ENCODE measurements at regions of chr6 and their contacts with region 1.

Region 1: GRCh38 chr6:56708810-56709597 is 66.3 kb upstream of the DST start:
- DNase-seq: no peak
- ATAC-seq: peak; percentile 35 to 46
- H3K4me3 ChIP-seq: no peak overlapping the region
- H3K27ac ChIP-seq: no peak overlapping the region
- H3K4me1 ChIP-seq: peaks cover 8% of the 10 kb centered on the region
- H3K27me3 ChIP-seq: no peaks in the 10 kb centered on the region

Region 2: DNA sequence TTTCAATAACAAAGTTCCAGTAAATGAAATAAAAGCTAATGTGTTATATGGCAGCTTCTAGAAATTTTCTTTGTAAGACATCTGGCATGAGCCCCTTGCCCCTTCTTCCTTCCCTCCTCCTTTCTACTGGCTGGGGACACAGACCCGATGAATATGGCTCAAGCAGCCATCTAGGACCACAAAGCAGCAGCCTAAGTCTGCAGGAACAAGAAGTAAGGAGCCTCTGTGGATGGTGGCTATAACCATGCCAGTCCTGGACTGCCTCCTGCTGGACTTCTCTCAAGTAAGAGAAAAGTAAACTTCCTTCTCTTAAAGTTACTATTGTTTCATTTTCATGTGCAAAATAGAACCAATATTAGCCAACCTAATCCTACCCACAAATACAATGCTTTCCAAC is 48.6 kb after region 1 on chr6:
- intact Hi-C with region 1: loop called in 2 of 4 experiments (anchors 5 to 10 kb)
- DNase-seq: no peak
- ATAC-seq: peak in 1 of 2 donors; percentile 55
- H3K4me3 ChIP-seq: no peak overlapping the region
- H3K27ac ChIP-seq: no peak overlapping the region
- H3K4me1 ChIP-seq: peaks cover 6% of the 10 kb centered on the region
- H3K27me3 ChIP-seq: no peaks in the 10 kb centered on the region

Region 3: GRCh38 chr6:56843573-56844349 is 134.8 kb after region 1 on chr6:
- intact Hi-C with region 1: loop called in 1 of 4 experiments (anchors 5 kb)
- DNase-seq: peak; percentile 79 to 91 (median 91)
- ATAC-seq: peak; percentile 95 to 96
- H3K4me3 ChIP-seq: peak overlapping the region; percentile 79
- H3K27ac ChIP-seq: peak overlapping the region; percentile 89
- H3K4me1 ChIP-seq: no peaks in the 10 kb centered on the region
- H3K27me3 ChIP-seq: no peaks in the 10 kb centered on the region

Region 4: DNA sequence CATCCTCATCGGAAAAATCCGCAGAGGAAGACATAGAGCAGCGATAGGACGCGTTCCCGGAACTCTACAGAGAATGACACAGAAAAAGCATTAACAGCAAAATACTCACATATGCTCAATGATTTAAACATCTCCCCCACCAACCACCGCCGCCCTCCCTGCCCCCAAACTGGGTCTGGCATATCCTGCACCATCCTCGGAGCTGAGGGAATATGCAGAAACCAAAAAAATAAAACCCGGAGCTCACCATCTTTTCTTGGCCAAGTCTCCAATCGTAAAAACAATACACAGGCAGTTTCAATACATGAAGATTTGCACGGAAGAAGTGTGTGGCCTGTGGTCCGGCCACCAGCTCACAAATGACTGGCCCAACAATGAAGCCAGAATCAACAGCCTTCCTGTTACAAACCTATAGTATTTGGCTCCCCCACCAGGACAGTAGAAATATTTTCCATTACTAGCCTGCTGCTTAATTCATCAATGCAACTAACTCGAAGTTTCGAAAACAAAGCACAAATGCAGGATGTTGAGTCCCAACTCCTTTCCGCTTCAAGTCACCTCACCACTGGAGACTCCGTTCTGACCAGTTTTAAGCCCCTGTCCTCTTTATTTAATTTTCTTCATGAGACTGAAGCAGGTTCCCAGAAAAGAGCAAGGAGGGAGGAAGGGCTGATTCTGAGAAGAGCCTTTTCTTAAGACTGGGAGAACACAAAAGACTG is 142.7 kb after region 1 on chr6:
- intact Hi-C with region 1: loop called (anchors 2 to 5 kb)
- DNase-seq: peak; percentile 34 to 58 (median 53)
- ATAC-seq: peak; percentile 81 to 89
- H3K4me3 ChIP-seq: peak overlapping the region; percentile 94
- H3K27ac ChIP-seq: peak overlapping the region; percentile 72
- H3K4me1 ChIP-seq: peaks cover 2% of the 10 kb centered on the region
- H3K27me3 ChIP-seq: no peaks in the 10 kb centered on the region